ENCODE measurements at regions of chr9 and their contacts with region 1.

Region 1: GRCh38 chr9:32968101-32969011 is 33.1 kb downstream of the APTX start:
- DNase-seq: no peak

Region 2: DNA sequence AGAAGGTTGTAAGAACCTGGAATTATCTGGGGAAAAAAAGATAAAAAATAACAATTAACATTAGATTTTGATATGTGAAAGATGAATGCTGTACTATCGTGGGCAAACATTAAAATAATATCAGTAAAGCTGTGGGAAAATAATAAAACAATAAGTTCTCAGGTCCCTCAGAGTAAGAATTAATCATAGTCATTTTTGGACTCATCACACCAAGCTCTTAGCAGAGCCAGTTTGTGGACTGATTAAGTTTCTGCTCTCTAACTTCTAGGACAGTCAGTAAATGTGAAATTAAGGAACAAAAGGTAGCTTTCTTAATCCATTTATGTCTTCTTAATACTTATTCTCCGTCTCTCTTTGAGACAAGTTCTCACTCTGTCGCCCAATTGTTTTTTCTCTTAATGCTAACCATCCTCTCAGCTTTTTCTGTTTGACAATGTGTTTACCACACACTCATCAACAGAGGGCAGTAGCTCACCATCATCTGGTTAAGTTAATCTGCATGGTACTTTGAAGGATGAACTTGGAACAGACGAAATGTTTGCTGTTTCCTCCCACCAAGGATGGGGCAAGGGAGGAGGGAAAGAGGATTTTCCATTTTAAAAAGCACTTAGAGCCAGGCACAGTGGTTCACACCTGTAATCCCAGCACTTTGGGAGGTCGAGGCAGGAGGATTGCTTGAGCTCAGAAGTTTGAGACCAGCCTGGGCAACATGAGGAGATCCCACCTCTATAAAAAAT is 589.2 kb before region 1 on chr9:
- intact Hi-C with region 1: loop called (anchors 5 kb)
- DNase-seq: no peak

Region 3: DNA sequence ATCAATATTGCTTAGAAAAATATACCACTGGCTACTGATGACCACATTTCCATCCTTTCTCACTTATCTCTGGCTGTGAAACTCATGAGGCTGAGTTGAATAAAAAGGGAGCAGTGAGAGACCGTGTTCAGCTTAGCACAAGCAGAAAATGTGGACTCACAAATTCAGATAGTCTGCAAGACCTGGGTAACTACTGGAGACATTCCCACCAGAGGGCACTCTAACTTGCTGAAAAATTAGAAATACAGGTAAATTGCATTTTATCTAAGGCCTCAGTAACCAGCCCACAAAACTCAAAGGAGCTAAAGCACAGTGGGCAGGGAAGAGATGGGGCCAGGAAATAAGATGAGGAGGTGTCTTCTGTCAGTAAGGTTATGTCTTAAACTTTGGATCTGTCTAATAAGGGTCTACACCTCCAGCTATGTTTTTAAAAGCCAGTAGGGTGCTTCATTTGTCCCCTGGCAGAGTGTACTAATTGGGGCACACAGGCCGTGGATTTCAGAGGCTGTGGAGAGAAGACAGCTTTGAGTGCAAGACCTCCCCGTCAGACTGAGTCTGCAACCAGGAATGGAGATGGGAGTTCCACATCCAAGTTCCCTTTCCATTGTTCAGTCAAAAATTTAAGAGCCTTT is 386.7 kb before region 1 on chr9:
- intact Hi-C with region 1: loop called (anchors 2 kb)
- DNase-seq: no peak